ENCODE measurements at regions of chr7 and their contacts with region 1.

Region 1: GRCh38 chr7:134432296-134433152 is 26.4 kb downstream of the AKR1B1 start:
- ATAC-seq: peak; percentile 94 to 99 (median 98)
- H3K4me3 ChIP-seq: peak overlapping the region; percentile 12 to 24 (median 19)
- H3K27ac ChIP-seq: no peak overlapping the region
- H3K4me1 ChIP-seq: peaks cover 0 to 3% of the 10 kb centered on the region in 2 donors

Region 2: DNA sequence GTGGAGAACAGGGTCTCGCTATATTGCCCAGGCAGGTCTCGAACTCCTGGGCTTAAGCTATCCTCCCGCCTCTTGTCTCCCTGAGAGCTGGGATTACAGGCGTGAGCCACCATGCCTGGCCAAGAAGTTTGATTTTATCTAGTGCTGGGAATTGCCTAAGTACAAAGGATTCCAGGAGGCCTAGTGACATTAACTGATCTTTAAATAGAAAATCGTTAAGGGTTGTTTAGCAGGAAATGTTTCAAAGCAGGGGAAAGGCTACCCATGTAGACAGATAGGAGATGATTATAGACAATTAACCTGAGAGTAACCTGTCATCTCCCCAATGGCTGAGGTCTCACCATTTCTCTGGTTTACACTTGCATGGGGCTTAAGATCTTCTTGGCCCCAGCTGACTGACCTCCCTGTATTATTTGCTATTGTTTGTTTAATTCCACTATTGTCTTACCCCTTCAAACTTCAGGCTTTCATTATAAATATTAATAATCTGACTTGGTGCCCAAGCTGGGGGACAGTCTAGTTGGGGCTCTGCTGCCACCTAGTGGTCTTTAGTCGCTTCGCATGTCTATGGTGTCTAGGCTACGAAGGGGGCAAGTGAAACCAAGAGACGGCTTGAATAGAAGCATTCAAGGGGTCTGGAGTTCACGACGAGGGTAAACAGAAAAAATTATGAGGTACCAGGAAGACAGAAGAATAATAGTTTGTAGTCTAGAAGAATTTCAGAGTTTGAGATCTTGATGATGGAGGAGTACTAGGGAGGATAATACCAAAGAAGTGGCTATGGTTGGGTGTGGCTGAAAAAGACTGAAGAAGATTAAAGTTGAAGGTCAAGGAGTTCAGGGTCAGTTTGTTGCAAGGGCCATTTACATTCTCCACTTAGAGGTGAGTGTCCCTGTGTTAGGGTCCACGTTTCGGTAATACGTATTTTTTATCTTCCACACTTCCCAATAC is 173.7 kb after region 1 on chr7:
- in situ Hi-C with region 1: loop called in 5 of 9 experiments (anchors 10 to 25 kb)
- ATAC-seq: peak; percentile 70 to 98 (median 84)
- H3K4me3 ChIP-seq: no peak overlapping the region
- H3K27ac ChIP-seq: no peak overlapping the region
- H3K4me1 ChIP-seq: no peaks in the 10 kb centered on the region

Measured in motor neuron (in vitro differentiated cells).